ENCODE measurements at regions of chr2 and their contacts with region 1.

Region 1: GRCh38 chr2:118309946-118310680 is 221.8 kb downstream of the INSIG2 start:
- DNase-seq: peak; percentile 74 to 80 (median 77)
- H3K4me3 ChIP-seq: peak overlapping the region; percentile 63 to 81
- H3K4me3 Mint-ChIP-seq: peak overlapping the region; percentile 86 to 95 (median 92)
- H3K27ac ChIP-seq: peak overlapping the region; percentile 66
- H3K27ac Mint-ChIP-seq: peak overlapping the region; percentile 90 to 99 (median 97)
- H3K4me1 ChIP-seq: peaks cover 10% of the 10 kb centered on the region
- H3K4me1 Mint-ChIP-seq: peaks cover 1 to 13% (median 7%) of the 10 kb centered on the region in 4 donors
- H3K27me3 ChIP-seq: no peaks in the 10 kb centered on the region
- H3K27me3 Mint-ChIP-seq: peaks cover 0 to 2% of the 10 kb centered on the region in 2 donors

Region 2: DNA sequence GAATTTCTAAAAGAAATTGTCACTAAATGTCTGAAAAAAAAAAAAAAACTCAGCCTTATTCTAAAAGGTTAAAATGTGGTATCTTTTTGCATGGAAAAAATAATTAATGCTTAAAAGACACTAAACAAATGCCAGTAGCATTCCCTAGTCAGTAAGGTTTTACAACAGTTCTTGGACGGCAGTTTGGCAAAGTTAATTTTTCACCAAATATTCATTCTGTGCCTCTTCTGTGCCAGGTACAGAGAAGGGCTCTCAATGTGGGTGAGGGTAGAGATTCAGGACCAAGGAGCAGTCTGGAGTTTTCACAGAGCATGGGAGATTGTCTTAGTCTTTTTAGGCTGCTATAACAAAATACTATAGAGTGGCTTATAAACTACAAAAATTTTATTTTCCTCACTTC is 290.3 kb before region 1 on chr2:
- CTCF ChIA-PET with region 1: no interaction called
- POLR2A ChIA-PET with region 1: no interaction called
- intact Hi-C with region 1: loop called (anchors 10 kb)
- DNase-seq: no peak
- H3K4me3 ChIP-seq: no peak overlapping the region
- H3K4me3 Mint-ChIP-seq: no peak overlapping the region
- H3K27ac ChIP-seq: no peak overlapping the region
- H3K27ac Mint-ChIP-seq: no peak overlapping the region
- H3K4me1 ChIP-seq: peaks cover 1% of the 10 kb centered on the region
- H3K4me1 Mint-ChIP-seq: peaks cover under 1 to 9% (median 4%) of the 10 kb centered on the region in 4 donors
- H3K27me3 ChIP-seq: no peaks in the 10 kb centered on the region
- H3K27me3 Mint-ChIP-seq: peaks cover 0 to 5% of the 10 kb centered on the region in 2 donors

Region 3: GRCh38 chr2:118088051-118089024 is 221.8 kb before region 1 on chr2 and contains the start of gene INSIG2:
- CTCF ChIA-PET with region 1: no interaction called
- POLR2A ChIA-PET with region 1: interaction called, 4 read pairs
- intact Hi-C with region 1: loop called (anchors 1 kb)
- DNase-seq: peak; percentile 82 to 88 (median 83)
- H3K4me3 ChIP-seq: peak within 1 kb of the TSS; percentile 87 to 94
- H3K4me3 Mint-ChIP-seq: peak within 1 kb of the TSS; percentile 90 to 96 (median 93)
- H3K27ac ChIP-seq: peak within 1 kb of the TSS; percentile 66
- H3K27ac Mint-ChIP-seq: peak within 1 kb of the TSS; percentile 70 to 94 (median 94)
- H3K4me1 ChIP-seq: peaks cover 38% of the 10 kb centered on the region
- H3K4me1 Mint-ChIP-seq: peaks cover 14 to 23% (median 18%) of the 10 kb centered on the region in 4 donors
- H3K27me3 ChIP-seq: no peaks in the 10 kb centered on the region
- H3K27me3 Mint-ChIP-seq: peaks cover 0 to 3% of the 10 kb centered on the region in 2 donors
- total RNA-seq, gene INSIG2: 18.0 to 19.7 TPM

Region 4: GRCh38 chr2:118197011-118197675 is 113.0 kb before region 1 on chr2:
- CTCF ChIA-PET with region 1: no interaction called
- POLR2A ChIA-PET with region 1: no interaction called
- intact Hi-C with region 1: no loop called
- DNase-seq: no peak
- H3K4me3 ChIP-seq: no peak overlapping the region
- H3K4me3 Mint-ChIP-seq: no peak overlapping the region
- H3K27ac ChIP-seq: no peak overlapping the region
- H3K27ac Mint-ChIP-seq: no peak overlapping the region
- H3K4me1 ChIP-seq: no peaks in the 10 kb centered on the region
- H3K4me1 Mint-ChIP-seq: no peaks in the 10 kb centered on the region
- H3K27me3 ChIP-seq: no peaks in the 10 kb centered on the region
- H3K27me3 Mint-ChIP-seq: peaks cover 0 to 3% of the 10 kb centered on the region in 2 donors

Region 5: GRCh38 chr2:118325321-118325955 is 15.3 kb after region 1 on chr2:
- CTCF ChIA-PET with region 1: no interaction called
- POLR2A ChIA-PET with region 1: no interaction called
- intact Hi-C with region 1: no loop called
- DNase-seq: no peak
- H3K4me3 ChIP-seq: no peak overlapping the region
- H3K4me3 Mint-ChIP-seq: no peak overlapping the region
- H3K27ac ChIP-seq: no peak overlapping the region
- H3K27ac Mint-ChIP-seq: no peak overlapping the region
- H3K4me1 ChIP-seq: no peaks in the 10 kb centered on the region
- H3K4me1 Mint-ChIP-seq: no peaks in the 10 kb centered on the region
- H3K27me3 ChIP-seq: no peaks in the 10 kb centered on the region
- H3K27me3 Mint-ChIP-seq: peaks cover 17 to 19% of the 10 kb centered on the region in 2 donors

Region 6: GRCh38 chr2:118350621-118351020 is 40.5 kb after region 1 on chr2:
- CTCF ChIA-PET with region 1: no interaction called
- POLR2A ChIA-PET with region 1: no interaction called
- intact Hi-C with region 1: no loop called
- DNase-seq: no peak
- H3K4me3 ChIP-seq: no peak overlapping the region
- H3K4me3 Mint-ChIP-seq: no peak overlapping the region
- H3K27ac ChIP-seq: no peak overlapping the region
- H3K27ac Mint-ChIP-seq: no peak overlapping the region
- H3K4me1 ChIP-seq: no peaks in the 10 kb centered on the region
- H3K4me1 Mint-ChIP-seq: no peaks in the 10 kb centered on the region
- H3K27me3 ChIP-seq: no peaks in the 10 kb centered on the region
- H3K27me3 Mint-ChIP-seq: peaks cover 3 to 29% of the 10 kb centered on the region in 2 donors

Region 7: DNA sequence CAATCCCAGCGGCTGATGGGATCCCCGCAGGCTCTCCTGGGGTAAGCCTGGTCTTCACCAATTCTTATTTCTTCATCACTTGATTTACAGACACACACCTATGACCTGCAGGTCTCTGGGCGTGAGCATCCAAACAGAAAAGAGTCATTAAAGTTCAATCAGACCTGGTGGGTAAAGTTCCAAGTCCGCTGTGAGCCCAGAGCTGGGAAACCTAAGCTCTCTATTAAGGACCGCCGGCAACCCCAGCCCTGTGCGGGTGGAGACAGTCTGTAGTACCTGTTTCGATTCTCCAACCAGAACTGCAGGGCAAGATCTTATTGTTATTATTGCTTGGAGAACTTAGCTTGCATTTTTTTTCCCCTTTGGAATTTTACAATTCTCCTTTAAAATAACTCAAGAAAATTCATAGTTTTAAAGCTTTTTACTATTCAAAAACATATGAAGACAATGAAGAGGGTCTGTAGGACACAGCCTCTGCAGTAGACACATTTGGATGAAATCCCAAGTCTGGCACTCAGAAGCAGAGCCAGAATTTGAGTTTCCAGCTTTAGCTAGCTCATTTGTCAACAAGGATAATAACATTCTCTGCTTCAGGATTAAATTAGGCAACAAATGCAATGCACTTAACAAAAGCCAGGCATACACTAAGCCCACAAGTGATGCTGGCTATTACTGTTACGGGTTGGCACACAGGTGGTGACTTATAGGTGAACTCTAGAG is 154.6 kb after region 1 on chr2:
- CTCF ChIA-PET with region 1: no interaction called
- POLR2A ChIA-PET with region 1: no interaction called
- intact Hi-C with region 1: no loop called
- DNase-seq: no peak
- H3K4me3 ChIP-seq: no peak overlapping the region
- H3K4me3 Mint-ChIP-seq: no peak overlapping the region
- H3K27ac ChIP-seq: no peak overlapping the region
- H3K27ac Mint-ChIP-seq: no peak overlapping the region
- H3K4me1 ChIP-seq: no peaks in the 10 kb centered on the region
- H3K4me1 Mint-ChIP-seq: no peaks in the 10 kb centered on the region
- H3K27me3 ChIP-seq: no peaks in the 10 kb centered on the region
- H3K27me3 Mint-ChIP-seq: peaks cover 5 to 12% of the 10 kb centered on the region in 2 donors

Measured in CD4-positive, alpha-beta memory T cell (primary cell).